ENCODE measurements at regions of chrX and their contacts with region 1.

Region 1: DNA sequence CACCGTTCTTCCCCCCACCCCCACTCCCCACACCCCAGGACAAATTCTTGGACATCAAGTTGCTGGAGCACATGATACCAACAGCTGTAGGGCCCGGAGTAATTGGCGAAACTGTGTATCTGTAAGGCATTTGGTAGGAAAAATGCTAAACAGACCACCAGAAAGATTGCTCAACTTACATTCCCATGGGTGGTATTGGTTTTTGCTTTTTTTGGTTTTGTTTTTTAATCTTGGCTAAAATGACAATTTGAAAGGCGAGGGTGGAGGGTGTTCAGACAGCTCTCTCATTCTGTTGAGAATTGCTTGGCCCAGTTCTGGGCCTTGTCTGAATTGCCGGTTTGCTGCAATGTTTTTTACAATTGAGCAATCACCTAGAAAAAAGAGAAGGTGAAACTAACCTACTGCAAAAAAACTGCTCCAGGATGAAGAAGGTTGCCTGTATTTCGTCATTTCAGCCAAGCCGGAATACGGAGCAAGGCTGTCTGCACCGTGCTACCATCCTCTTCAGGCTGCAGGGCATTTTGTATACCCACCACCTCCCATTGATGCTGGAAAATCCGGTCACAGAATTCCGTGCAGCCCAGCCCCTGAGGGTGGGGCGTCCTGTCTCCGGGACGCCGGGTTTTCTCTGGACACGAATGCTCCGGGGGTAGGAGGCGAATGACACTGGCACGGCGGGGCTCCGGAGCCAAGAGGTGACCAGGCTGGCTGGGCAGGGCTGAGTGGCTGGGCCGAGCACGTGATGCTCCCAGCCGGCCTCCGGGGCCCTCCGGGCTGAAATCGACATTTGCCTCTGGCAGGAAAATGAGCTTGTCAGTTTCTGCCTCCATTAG is at the start of gene CLCN4:
- DNase-seq: no peak
- ATAC-seq: no peak
- H3K4me3 ChIP-seq: no peak within 1 kb of the TSS
- H3K27ac ChIP-seq: no peak within 1 kb of the TSS
- H3K4me1 ChIP-seq: peaks cover 13 to 19% of the 10 kb centered on the region in 2 experiments; a peak in 4 of 5 replicates
- H3K27me3 ChIP-seq: no peaks in the 10 kb centered on the region
- CTCF ChIP-seq: no peak
- EP300 ChIP-seq: no peak
- POLR2A ChIP-seq: no peak
- RAD21 ChIP-seq: no peak
- polyA plus RNA-seq, gene CLCN4: 0.03 to 0.24 TPM

Region 2: GRCh38 chrX:10178866-10179463 is 22.6 kb after region 1 on chrX:
- CTCF ChIA-PET with region 1: no interaction called
- POLR2A ChIA-PET with region 1: interaction called, 3 read pairs
- in situ Hi-C with region 1: no loop called
- intact Hi-C with region 1: loop called (anchors 2 kb)
- DNase-seq: peak; percentile 26 to 71 (median 46)
- ATAC-seq: peak; percentile 90
- H3K4me3 ChIP-seq: no peak overlapping the region
- H3K27ac ChIP-seq: peak overlapping the region; percentile 48
- H3K4me1 ChIP-seq: peaks cover 20 to 47% of the 10 kb centered on the region in 2 experiments
- H3K27me3 ChIP-seq: no peaks in the 10 kb centered on the region; a peak in 1 of 5 replicates
- CTCF ChIP-seq: no peak
- EP300 ChIP-seq: peak; percentile 92
- POLR2A ChIP-seq: no peak
- RAD21 ChIP-seq: no peak

Measured in K562 (cell line).